ENCODE measurements at regions of chr2 and their contacts with region 1.

Region 1: DNA sequence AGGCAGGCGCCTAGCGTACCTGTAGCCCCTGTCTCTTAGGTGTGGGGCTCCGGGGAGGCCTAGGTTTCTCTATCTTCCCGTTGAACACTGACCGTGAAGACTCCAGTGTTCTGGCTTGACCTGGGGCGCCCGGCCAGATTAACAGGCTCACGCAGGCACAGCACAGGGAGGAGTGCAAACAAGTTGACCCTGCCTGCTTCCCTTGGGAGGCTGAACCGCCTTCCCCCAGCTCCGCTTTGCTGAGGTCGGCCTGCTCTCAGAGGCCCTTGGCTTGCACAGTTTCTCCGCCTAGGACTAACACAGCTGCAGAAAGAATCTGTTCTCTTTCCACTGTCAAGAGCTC is 566 bp downstream of the PCYOX1 start:
- DNase-seq: no peak
- H3K4me3 ChIP-seq: peak overlapping the region; percentile 86
- H3K4me3 Mint-ChIP-seq: peak overlapping the region; percentile 89 to 96 (median 92)
- H3K27ac ChIP-seq: peak overlapping the region; percentile 57
- H3K27ac Mint-ChIP-seq: peak overlapping the region in 7 of 8 donors; percentile 53 to 90 (median 75)
- H3K4me1 ChIP-seq: peaks cover 17% of the 10 kb centered on the region
- H3K4me1 Mint-ChIP-seq: peaks cover 26 to 52% (median 37%) of the 10 kb centered on the region in 3 donors
- H3K27me3 ChIP-seq: no peaks in the 10 kb centered on the region
- H3K27me3 Mint-ChIP-seq: no peaks in the 10 kb centered on the region

Region 2: GRCh38 chr2:70190418-70191243 is 67.9 kb before region 1 on chr2 and contains the start of gene C2orf42:
- CTCF ChIA-PET with region 1: no interaction called
- POLR2A ChIA-PET with region 1: interaction called, 12 read pairs
- DNase-seq: peak; percentile 86 to 97 (median 96)
- H3K4me3 ChIP-seq: peak within 1 kb of the TSS; percentile 82
- H3K4me3 Mint-ChIP-seq: peak within 1 kb of the TSS; percentile 90 to 98 (median 95)
- H3K27ac ChIP-seq: peak within 1 kb of the TSS; percentile 93
- H3K27ac Mint-ChIP-seq: peak within 1 kb of the TSS; percentile 96 to 100 (median 99)
- H3K4me1 ChIP-seq: peaks cover 5% of the 10 kb centered on the region
- H3K4me1 Mint-ChIP-seq: peaks cover 17 to 22% (median 22%) of the 10 kb centered on the region in 3 donors
- H3K27me3 ChIP-seq: no peaks in the 10 kb centered on the region
- H3K27me3 Mint-ChIP-seq: peaks cover 0 to under 1% of the 10 kb centered on the region in 2 donors
- total RNA-seq, gene C2orf42: 29.1 to 34.6 TPM

Region 3: DNA sequence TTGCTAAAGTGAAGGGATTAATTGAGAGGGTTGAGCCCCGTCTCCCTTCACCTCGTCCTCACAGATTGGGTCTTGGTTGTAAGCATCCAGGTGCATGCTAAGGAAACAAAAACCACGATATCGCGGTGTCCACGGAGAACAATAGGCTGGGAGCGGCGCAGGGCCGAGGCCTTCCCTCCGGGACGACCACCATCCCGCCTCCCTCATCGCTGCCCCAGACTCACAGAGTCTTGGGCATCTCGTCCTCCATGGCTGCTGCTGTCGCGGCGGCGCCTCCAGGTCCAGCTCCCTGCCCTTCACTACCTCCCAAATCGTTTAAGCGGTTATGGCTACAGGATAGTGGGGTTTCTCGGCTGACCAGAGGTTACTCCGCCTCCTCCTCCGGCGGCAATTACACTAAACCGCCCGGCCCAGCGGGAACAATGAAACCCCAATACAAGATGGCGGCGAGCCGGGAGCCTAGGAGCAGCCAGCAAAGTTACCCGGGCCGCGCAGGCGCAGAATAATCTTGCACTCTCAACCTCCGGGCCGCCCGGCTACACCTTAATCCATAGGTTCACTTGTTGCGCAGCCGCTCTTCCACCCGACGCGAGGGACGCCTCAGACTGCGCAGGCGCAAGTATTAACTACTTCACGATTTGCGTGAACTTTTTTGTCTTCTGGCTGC is 10.2 kb before region 1 on chr2 and contains the start of gene TIA1:
- CTCF ChIA-PET with region 1: interaction called, 19 read pairs
- POLR2A ChIA-PET with region 1: interaction called, 12 read pairs
- DNase-seq: peak; percentile 96 to 100 (median 98)
- H3K4me3 ChIP-seq: peak within 1 kb of the TSS; percentile 98
- H3K4me3 Mint-ChIP-seq: peak within 1 kb of the TSS; percentile 90 to 98 (median 95)
- H3K27ac ChIP-seq: peak within 1 kb of the TSS; percentile 96
- H3K27ac Mint-ChIP-seq: peak within 1 kb of the TSS; percentile 94 to 100 (median 98)
- H3K4me1 ChIP-seq: peaks cover 33% of the 10 kb centered on the region
- H3K4me1 Mint-ChIP-seq: peaks cover 39 to 47% (median 43%) of the 10 kb centered on the region in 3 donors
- H3K27me3 ChIP-seq: no peaks in the 10 kb centered on the region
- H3K27me3 Mint-ChIP-seq: peaks cover 0 to 4% of the 10 kb centered on the region in 2 donors
- total RNA-seq, gene TIA1: 88.1 to 98.7 TPM

Region 4: DNA sequence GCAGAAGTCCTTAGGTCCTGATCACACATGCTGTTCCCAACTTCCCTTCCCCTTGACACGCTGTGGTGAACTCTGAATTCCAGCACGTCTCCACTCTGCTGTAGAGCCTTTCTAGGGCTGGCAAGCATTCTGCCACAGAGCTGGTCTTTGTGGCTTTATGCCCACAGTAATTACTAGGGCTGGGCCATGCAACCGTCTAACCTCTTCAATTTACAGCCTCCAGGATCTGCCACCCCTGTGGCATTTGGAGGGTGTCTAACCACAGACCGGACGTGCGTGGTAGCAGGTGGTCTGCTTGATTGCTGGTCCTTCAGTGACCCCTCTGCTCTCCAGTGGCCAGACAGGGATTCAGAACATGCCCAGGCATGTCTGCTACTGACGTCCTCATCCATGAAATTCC is 338.2 kb after region 1 on chr2:
- CTCF ChIA-PET with region 1: no interaction called
- POLR2A ChIA-PET with region 1: no interaction called
- DNase-seq: no peak
- H3K4me3 ChIP-seq: no peak overlapping the region
- H3K4me3 Mint-ChIP-seq: no peak overlapping the region
- H3K27ac ChIP-seq: no peak overlapping the region
- H3K27ac Mint-ChIP-seq: no peak overlapping the region
- H3K4me1 ChIP-seq: no peaks in the 10 kb centered on the region
- H3K4me1 Mint-ChIP-seq: no peaks in the 10 kb centered on the region
- H3K27me3 ChIP-seq: no peaks in the 10 kb centered on the region
- H3K27me3 Mint-ChIP-seq: peaks cover 6 to 17% of the 10 kb centered on the region in 2 donors